Naive thymus-derived CD4-positive, alpha-beta T cell (primary cell): ENCODE measurements at regions of chr2 and their contacts with region 1.

Region 1: GRCh38 chr2:172465417-172466334 is 38.3 kb downstream of the ITGA6 start:
- DNase-seq: peak in 8 of 9 donors; percentile 58 to 83 (median 76)
- ATAC-seq: peak; percentile 65
- H3K4me3 ChIP-seq: peak overlapping the region; percentile 68
- H3K4me3 Mint-ChIP-seq: peak overlapping the region; percentile 21 to 93 (median 84)
- H3K27ac ChIP-seq: peak overlapping the region; percentile 69
- H3K27ac Mint-ChIP-seq: peak overlapping the region; percentile 34 to 98 (median 91)
- H3K4me1 ChIP-seq: peaks cover 50 to 54% of the 10 kb centered on the region in 2 donors
- H3K4me1 Mint-ChIP-seq: peaks cover 54 to 97% (median 84%) of the 10 kb centered on the region in 7 donors
- H3K27me3 ChIP-seq: no peaks in the 10 kb centered on the region
- H3K27me3 Mint-ChIP-seq: peaks cover 0 to 2% (median 0%) of the 10 kb centered on the region in 5 donors

Region 2: DNA sequence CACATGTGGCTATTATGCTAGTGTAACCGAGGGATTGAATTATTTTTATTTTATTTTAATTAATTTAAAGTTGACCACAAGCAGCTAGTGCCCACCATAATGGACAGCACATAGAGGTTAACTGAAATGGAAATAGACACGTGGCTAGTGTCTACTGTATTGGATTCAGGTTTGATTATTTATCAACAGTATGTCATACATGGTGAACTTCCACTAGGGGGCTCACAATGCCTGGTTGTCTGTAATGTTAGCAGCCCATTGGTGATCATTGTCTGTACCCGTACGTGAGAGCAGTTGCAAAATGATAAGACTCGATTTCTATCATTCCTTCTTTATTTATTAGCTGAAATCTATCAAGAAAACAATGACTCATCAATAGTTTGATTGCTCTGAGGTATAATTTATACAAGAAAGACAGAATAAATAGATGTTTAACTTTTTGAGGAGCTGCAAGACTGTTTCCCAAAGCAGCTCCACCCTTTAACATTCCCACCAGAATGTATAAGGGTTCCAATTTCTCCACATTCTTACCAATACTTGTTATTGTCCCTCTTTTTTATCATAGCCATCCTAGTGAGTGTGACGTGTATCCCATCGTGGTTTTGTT is 866.9 kb before region 1 on chr2:
- CTCF ChIA-PET with region 1: no interaction called
- POLR2A ChIA-PET with region 1: no interaction called
- intact Hi-C with region 1: loop called (anchors 1 kb)
- DNase-seq: peak in 7 of 9 donors; percentile 22 to 64 (median 51)
- ATAC-seq: peak; percentile 94
- H3K4me3 ChIP-seq: no peak overlapping the region
- H3K4me3 Mint-ChIP-seq: no peak overlapping the region
- H3K27ac ChIP-seq: no peak overlapping the region
- H3K27ac Mint-ChIP-seq: no peak overlapping the region
- H3K4me1 ChIP-seq: peaks cover 0 to 3% of the 10 kb centered on the region in 2 donors
- H3K4me1 Mint-ChIP-seq: peaks cover 0 to 6% (median 0%) of the 10 kb centered on the region in 7 donors
- H3K27me3 ChIP-seq: no peaks in the 10 kb centered on the region
- H3K27me3 Mint-ChIP-seq: peaks cover 0 to 25% (median 4%) of the 10 kb centered on the region in 5 donors

Region 3: GRCh38 chr2:171939743-171940071 is 526.0 kb before region 1 on chr2:
- CTCF ChIA-PET with region 1: no interaction called
- POLR2A ChIA-PET with region 1: no interaction called
- intact Hi-C with region 1: loop called in 1 of 2 experiments (anchors 5 kb)
- DNase-seq: no peak
- ATAC-seq: peak; percentile 64
- H3K4me3 ChIP-seq: no peak overlapping the region
- H3K4me3 Mint-ChIP-seq: no peak overlapping the region
- H3K27ac ChIP-seq: no peak overlapping the region
- H3K27ac Mint-ChIP-seq: no peak overlapping the region
- H3K4me1 ChIP-seq: no peaks in the 10 kb centered on the region
- H3K4me1 Mint-ChIP-seq: peaks cover 23 to 63% (median 38%) of the 10 kb centered on the region in 7 donors
- H3K27me3 ChIP-seq: no peaks in the 10 kb centered on the region
- H3K27me3 Mint-ChIP-seq: no peaks in the 10 kb centered on the region

Region 4: DNA sequence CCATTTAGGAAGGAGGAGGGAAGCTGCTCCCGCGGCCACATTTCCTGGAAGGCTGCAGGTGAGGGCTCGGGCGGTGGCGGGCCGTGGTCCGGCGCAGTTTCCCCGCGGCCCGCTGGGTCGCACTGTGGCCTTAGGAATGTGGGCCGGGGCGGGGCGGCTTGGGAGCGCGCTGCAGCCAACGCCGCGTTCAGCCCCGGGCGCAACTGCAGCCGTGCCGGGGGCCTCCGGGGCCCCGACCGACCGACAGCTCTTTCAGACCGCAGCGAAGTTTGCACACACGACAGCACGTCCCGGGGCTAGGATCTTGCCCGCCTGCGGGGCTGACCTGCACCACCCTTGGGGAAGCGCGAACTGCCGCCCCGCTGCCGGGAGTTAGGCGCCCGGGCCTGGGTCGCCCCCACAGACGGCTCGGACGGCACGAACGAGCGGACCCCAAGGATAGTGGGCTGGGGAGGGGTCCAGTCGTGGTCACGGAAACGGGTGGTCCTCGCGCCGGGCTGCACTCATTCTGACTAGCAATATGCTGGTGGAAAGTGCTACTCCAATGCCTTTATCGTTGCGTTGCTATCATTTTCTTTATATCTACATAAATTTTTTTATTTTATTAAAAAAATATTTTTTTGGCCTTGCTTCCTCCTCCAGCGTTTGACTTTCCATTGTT is 293.0 kb before region 1 on chr2:
- CTCF ChIA-PET with region 1: interaction called, 129 read pairs
- POLR2A ChIA-PET with region 1: interaction called, 10 read pairs
- intact Hi-C with region 1: loop called (anchors 1 kb)
- DNase-seq: peak; percentile 18 to 74 (median 61)
- ATAC-seq: peak; percentile 97
- H3K4me3 ChIP-seq: peak overlapping the region; percentile 55
- H3K4me3 Mint-ChIP-seq: peak overlapping the region; percentile 69 to 86 (median 79)
- H3K27ac ChIP-seq: peak overlapping the region; percentile 49
- H3K27ac Mint-ChIP-seq: peak overlapping the region in 4 of 9 donors; percentile 12 to 68 (median 47)
- H3K4me1 ChIP-seq: peaks cover 0 to 3% of the 10 kb centered on the region in 2 donors
- H3K4me1 Mint-ChIP-seq: peaks cover 6 to 10% (median 6%) of the 10 kb centered on the region in 7 donors
- H3K27me3 ChIP-seq: no peaks in the 10 kb centered on the region
- H3K27me3 Mint-ChIP-seq: peaks cover 0 to 53% (median 0%) of the 10 kb centered on the region in 5 donors

Region 5: DNA sequence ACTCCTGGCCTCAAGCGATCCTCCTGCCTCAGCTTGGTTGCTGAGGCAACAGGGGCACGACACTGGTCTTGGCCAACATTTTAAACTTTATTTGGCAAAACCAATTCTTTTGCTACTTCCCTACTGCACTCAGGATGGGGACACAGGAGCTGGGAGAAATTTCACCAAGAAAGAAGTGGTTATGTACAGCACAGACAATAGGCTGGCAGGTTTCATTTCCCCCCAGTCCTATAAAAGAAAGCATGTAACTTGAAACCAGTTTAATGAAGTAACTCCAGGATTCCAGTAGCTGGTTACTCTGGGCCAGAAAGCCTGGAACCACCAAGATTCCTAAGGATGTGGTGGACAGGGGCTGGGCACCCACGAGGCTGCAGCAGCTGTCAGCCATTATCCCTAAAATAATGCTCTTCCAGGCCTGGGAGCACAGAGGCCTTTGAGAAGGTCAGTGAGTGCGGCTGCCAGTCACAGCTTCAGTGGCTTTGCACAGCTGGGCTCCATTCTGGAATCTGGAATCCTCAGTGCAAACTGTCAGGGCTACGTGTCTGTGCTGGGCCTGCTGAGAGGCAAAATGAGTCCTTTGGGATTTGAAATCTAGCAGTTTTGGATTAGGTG is 180.6 kb before region 1 on chr2:
- CTCF ChIA-PET with region 1: interaction called, 4 read pairs
- POLR2A ChIA-PET with region 1: no interaction called
- intact Hi-C with region 1: loop called in 1 of 2 experiments (anchors 5 kb)
- DNase-seq: no peak
- ATAC-seq: no peak
- H3K4me3 ChIP-seq: no peak overlapping the region
- H3K4me3 Mint-ChIP-seq: peak overlapping the region in 8 of 10 donors; percentile 53 to 79 (median 67)
- H3K27ac ChIP-seq: no peak overlapping the region
- H3K27ac Mint-ChIP-seq: peak overlapping the region in 2 of 9 donors; percentile 16 to 56
- H3K4me1 ChIP-seq: peaks cover 0 to 22% of the 10 kb centered on the region in 2 donors
- H3K4me1 Mint-ChIP-seq: peaks cover 8 to 43% (median 38%) of the 10 kb centered on the region in 7 donors
- H3K27me3 ChIP-seq: no peaks in the 10 kb centered on the region
- H3K27me3 Mint-ChIP-seq: peaks cover 0 to 15% (median 0%) of the 10 kb centered on the region in 5 donors

Region 6: DNA sequence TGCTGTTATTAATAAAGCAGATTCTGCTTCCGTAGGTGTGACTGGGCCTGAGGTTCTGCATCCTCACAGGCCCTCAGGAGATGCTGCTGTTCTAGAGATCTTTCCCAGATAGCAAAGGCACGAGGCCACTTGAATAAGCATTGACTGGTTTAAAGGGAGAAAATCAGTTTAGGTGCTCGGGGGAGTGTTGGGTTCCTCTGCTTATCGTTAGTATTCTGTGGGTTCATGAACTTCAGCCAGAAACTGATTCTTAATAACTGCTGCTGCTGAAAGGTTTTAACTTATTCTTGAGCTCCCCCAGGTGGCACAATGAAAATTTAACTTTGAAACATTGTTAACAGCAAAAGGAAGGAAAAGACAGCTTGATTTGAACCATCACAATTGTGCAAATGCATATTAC is 18.6 kb after region 1 on chr2:
- CTCF ChIA-PET with region 1: interaction called, 58 read pairs
- POLR2A ChIA-PET with region 1: interaction called, 7 read pairs
- intact Hi-C with region 1: loop called in 1 of 2 experiments (anchors 1 kb)
- DNase-seq: peak in 7 of 9 donors; percentile 46 to 68 (median 61)
- ATAC-seq: peak; percentile 66
- H3K4me3 ChIP-seq: no peak overlapping the region
- H3K4me3 Mint-ChIP-seq: peak overlapping the region in 8 of 10 donors; percentile 1 to 81 (median 41)
- H3K27ac ChIP-seq: peak overlapping the region; percentile 16
- H3K27ac Mint-ChIP-seq: peak overlapping the region in 8 of 9 donors; percentile 76 to 94 (median 84)
- H3K4me1 ChIP-seq: peaks cover 0 to 58% of the 10 kb centered on the region in 2 donors
- H3K4me1 Mint-ChIP-seq: peaks cover 27 to 92% (median 77%) of the 10 kb centered on the region in 7 donors
- H3K27me3 ChIP-seq: no peaks in the 10 kb centered on the region
- H3K27me3 Mint-ChIP-seq: no peaks in the 10 kb centered on the region

Region 7: GRCh38 chr2:172905937-172906811 is 440.5 kb after region 1 on chr2:
- CTCF ChIA-PET with region 1: no interaction called
- POLR2A ChIA-PET with region 1: no interaction called
- intact Hi-C with region 1: no loop called
- DNase-seq: no peak
- ATAC-seq: no peak
- H3K4me3 ChIP-seq: no peak overlapping the region
- H3K4me3 Mint-ChIP-seq: no peak overlapping the region
- H3K27ac ChIP-seq: no peak overlapping the region
- H3K27ac Mint-ChIP-seq: no peak overlapping the region
- H3K4me1 ChIP-seq: no peaks in the 10 kb centered on the region
- H3K4me1 Mint-ChIP-seq: peaks cover 0 to 15% (median 5%) of the 10 kb centered on the region in 7 donors
- H3K27me3 ChIP-seq: no peaks in the 10 kb centered on the region
- H3K27me3 Mint-ChIP-seq: peaks cover 0 to 4% (median 0%) of the 10 kb centered on the region in 5 donors